Panc1 (cell line): ENCODE measurements at regions of chr12 and their contacts with region 1.

Region 1: GRCh38 chr12:52023182-52023975 is 16.6 kb downstream of the TAMALIN start:
- DNase-seq: no peak
- ATAC-seq: peak; percentile 81
- H3K4me3 ChIP-seq: peak overlapping the region; percentile 52 to 73
- H3K27ac ChIP-seq: peak overlapping the region; percentile 57; the same call in 1 of the 2 replicates
- H3K4me1 ChIP-seq: peaks cover 6% of the 10 kb centered on the region
- H3K27me3 ChIP-seq: no peaks in the 10 kb centered on the region
- CTCF ChIP-seq: peak; percentile 99

Region 2: DNA sequence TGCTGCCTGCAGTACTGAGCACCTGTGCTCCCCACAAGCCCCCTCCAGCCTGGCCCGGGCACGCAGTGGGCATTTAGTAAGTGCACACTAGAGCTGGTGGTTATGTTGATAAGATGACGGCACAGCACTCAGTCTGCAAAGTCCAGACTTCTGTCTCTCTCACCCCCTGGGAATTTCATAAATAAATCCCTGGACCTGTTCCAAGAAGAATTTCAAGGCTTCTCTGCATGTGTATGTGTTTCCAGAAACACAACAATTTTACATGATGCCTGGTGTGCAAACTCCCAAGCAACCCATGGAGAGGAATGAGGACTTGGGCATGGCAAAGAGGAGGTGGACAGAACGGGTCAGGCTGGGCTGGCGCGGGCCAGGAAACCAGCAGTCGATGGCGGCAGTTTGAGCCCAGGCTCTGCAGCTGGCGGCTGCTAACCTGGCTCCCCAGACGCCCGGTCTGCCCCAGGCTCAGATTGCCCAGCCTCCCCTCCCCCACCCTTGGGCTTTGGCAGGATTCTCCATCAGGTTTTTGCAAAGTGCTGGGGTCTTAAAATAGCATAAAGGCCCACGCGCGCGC is 82.3 kb before region 1 on chr12:
- CTCF ChIA-PET with region 1: interaction called, 13 read pairs
- POLR2A ChIA-PET with region 1: no interaction called
- in situ Hi-C with region 1: no loop called
- intact Hi-C with region 1: no loop called
- DNase-seq: no peak
- ATAC-seq: no peak
- H3K4me3 ChIP-seq: no peak overlapping the region
- H3K27ac ChIP-seq: no peak overlapping the region
- H3K4me1 ChIP-seq: no peaks in the 10 kb centered on the region
- H3K27me3 ChIP-seq: no peaks in the 10 kb centered on the region; the same call in 1 of the 2 replicates
- CTCF ChIP-seq: no peak

Region 3: DNA sequence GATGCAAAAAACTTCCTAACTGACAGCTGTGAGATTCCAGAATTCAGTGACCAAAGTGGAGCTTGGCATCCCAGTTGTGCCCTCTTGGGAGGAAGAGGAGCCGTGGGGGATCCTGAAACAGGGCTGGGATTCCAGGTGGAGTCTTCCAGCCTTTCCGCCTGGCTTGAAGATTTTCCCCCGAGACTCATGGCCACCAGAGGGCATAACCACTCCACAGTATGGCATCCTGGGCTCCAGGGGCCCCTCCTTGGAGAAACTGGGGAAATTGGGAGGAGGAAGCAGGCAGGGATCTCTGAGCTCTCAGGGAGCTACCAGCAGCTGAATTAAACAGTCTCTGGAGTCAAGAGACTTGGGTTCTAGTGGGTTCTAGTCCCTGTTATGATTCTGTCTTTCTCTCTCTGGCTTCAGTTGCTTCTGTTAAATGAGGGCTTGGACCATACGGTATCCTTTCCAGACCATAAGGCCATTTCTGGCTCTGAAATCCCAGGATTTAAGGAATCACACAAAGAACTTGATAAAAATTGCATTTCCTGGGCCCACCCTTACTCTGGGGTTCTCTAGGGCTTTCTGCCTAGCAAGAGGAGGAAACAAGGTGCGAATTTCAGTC is 19.2 kb before region 1 on chr12:
- CTCF ChIA-PET with region 1: interaction called, 62 read pairs
- POLR2A ChIA-PET with region 1: interaction called, 15 read pairs
- in situ Hi-C with region 1: no loop called
- intact Hi-C with region 1: loop called (anchors 2 kb)
- DNase-seq: no peak
- ATAC-seq: peak; percentile 78
- H3K4me3 ChIP-seq: no peak overlapping the region
- H3K27ac ChIP-seq: no peak overlapping the region
- H3K4me1 ChIP-seq: no peaks in the 10 kb centered on the region
- H3K27me3 ChIP-seq: peaks cover 4% of the 10 kb centered on the region; the same call in 1 of the 2 replicates
- CTCF ChIP-seq: peak; percentile 85

Region 4: GRCh38 chr12:52082988-52083637 is 59.7 kb after region 1 on chr12:
- CTCF ChIA-PET with region 1: interaction called, 47 read pairs
- POLR2A ChIA-PET with region 1: no interaction called
- in situ Hi-C with region 1: no loop called
- intact Hi-C with region 1: loop called (anchors 1 kb)
- DNase-seq: peak; percentile 45
- ATAC-seq: peak; percentile 69
- H3K4me3 ChIP-seq: no peak overlapping the region
- H3K27ac ChIP-seq: no peak overlapping the region
- H3K4me1 ChIP-seq: peaks cover 7% of the 10 kb centered on the region; the same call in 1 of the 2 replicates
- H3K27me3 ChIP-seq: no peaks in the 10 kb centered on the region
- CTCF ChIP-seq: peak; percentile 99

Region 5: GRCh38 chr12:52097045-52097666 is 73.8 kb after region 1 on chr12:
- CTCF ChIA-PET with region 1: no interaction called
- POLR2A ChIA-PET with region 1: no interaction called
- in situ Hi-C with region 1: no loop called
- intact Hi-C with region 1: no loop called
- DNase-seq: no peak
- ATAC-seq: 0 out of 2 replicates have a peak, but pooled peaks have one; percentile 63
- H3K4me3 ChIP-seq: no peak overlapping the region
- H3K27ac ChIP-seq: no peak overlapping the region
- H3K4me1 ChIP-seq: no peaks in the 10 kb centered on the region; the same call in 1 of the 2 replicates
- H3K27me3 ChIP-seq: peaks cover 15% of the 10 kb centered on the region
- CTCF ChIP-seq: no peak